GM12878 (cell line): ENCODE measurements at regions of chr9 and their contacts with region 1.

Region 1: GRCh38 chr9:76987594-76988200 is 31.8 kb upstream of the FOXB2 start:
- DNase-seq: peak; percentile 5
- ATAC-seq: peak; percentile 87
- H3K4me3 ChIP-seq: no peak overlapping the region
- H3K27ac ChIP-seq: no peak overlapping the region
- H3K4me1 ChIP-seq: no peaks in the 10 kb centered on the region
- H3K27me3 ChIP-seq: no peaks in the 10 kb centered on the region; a peak in 1 of 4 replicates
- CTCF ChIP-seq: peak; percentile 43 to 67 (median 50); a peak in 5 of 6 replicates
- EP300 ChIP-seq: no peak
- POLR2A ChIP-seq: no peak
- RAD21 ChIP-seq: peak; percentile 81

Region 2: GRCh38 chr9:76756268-76756640 is 231.4 kb before region 1 on chr9:
- CTCF ChIA-PET with region 1: interaction called, 3 read pairs
- POLR2A ChIA-PET with region 1: no interaction called
- RAD21 ChIA-PET with region 1: no interaction called
- SMC1A ChIA-PET with region 1: no interaction called
- in situ Hi-C with region 1: no loop called
- intact Hi-C with region 1: loop called (anchors 5 kb)
- DNase-seq: no peak
- ATAC-seq: peak; percentile 58
- H3K4me3 ChIP-seq: peak overlapping the region; percentile 50
- H3K27ac ChIP-seq: no peak overlapping the region
- H3K4me1 ChIP-seq: peaks cover 3% of the 10 kb centered on the region; the same call in 1 of the 2 replicates
- H3K27me3 ChIP-seq: no peaks in the 10 kb centered on the region
- CTCF ChIP-seq: peak in 2 of 3 experiments; percentile 26 to 31; a peak in 3 of 6 replicates
- EP300 ChIP-seq: no peak
- POLR2A ChIP-seq: no peak
- RAD21 ChIP-seq: 0 out of 2 replicates have a peak, but pooled peaks have one; percentile 14

Region 3: GRCh38 chr9:76887003-76887821 is 100.5 kb before region 1 on chr9:
- CTCF ChIA-PET with region 1: no interaction called
- POLR2A ChIA-PET with region 1: no interaction called
- RAD21 ChIA-PET with region 1: no interaction called
- SMC1A ChIA-PET with region 1: no interaction called
- in situ Hi-C with region 1: no loop called
- intact Hi-C with region 1: loop called (anchors 5 kb)
- DNase-seq: no peak
- ATAC-seq: peak; percentile 77
- H3K4me3 ChIP-seq: no peak overlapping the region
- H3K27ac ChIP-seq: peak overlapping the region; percentile 11; the same call in 1 of the 2 replicates
- H3K4me1 ChIP-seq: peaks cover 22% of the 10 kb centered on the region
- H3K27me3 ChIP-seq: no peaks in the 10 kb centered on the region
- CTCF ChIP-seq: peak in 1 of 3 experiments; percentile 7; a peak in 1 of 6 replicates
- EP300 ChIP-seq: no peak
- POLR2A ChIP-seq: no peak
- RAD21 ChIP-seq: no peak